ENCODE measurements at regions of chr7 and their contacts with region 1.

Region 1: DNA sequence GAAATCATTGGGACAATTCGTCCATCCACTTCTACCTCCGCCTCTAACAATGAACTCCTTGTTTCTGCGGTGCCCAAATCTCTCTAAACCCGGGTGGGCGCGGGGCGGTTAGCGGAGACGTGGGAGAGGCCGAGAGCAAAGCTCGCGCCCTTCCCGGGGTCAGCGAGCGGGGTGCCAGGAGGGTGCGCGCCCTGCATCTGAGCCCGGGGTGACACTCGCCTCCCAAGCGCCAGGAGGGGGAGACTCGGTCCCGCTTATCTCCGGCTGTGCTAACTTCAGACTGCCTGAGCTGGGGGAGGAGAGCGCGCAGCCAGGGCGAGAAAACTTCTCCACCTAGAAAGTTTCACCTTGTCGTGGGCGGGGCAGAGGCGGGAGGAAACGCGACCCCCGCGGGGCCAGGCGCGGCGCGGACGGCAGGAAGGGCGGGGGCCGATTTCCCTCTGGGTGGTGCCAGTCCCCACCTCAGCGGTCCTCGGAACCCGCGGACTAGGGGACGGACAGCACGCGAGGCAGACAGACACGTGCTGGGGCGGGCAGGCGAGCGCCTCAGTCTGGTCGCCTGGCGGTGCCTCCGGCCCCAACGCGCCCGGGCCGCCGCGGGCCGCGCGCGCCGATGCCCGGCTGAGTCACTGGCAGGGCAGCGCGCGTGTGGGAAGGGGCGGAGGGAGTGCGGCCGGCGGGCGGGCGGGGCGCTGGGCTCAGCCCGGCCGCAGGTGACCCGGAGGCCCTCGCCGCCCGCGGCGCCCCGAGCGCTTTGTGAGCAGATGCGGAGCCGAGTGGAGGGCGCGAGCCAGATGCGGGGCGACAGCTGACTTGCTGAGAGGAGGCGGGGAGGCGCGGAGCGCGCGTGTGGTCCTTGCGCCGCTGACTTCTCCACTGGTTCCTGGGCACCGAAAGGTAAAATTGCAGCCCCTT is at the start of gene MET:
- DNase-seq: peak; percentile 95
- H3K4me3 ChIP-seq: peak within 1 kb of the TSS; percentile 92 to 98 (median 94)
- H3K27ac ChIP-seq: peak within 1 kb of the TSS; percentile 98
- H3K4me1 ChIP-seq: peaks cover 32% of the 10 kb centered on the region
- H3K27me3 ChIP-seq: no peaks in the 10 kb centered on the region
- CTCF ChIP-seq: peak; percentile 32 to 81
- total RNA-seq, gene MET: 112 to 179 TPM

Region 2: DNA sequence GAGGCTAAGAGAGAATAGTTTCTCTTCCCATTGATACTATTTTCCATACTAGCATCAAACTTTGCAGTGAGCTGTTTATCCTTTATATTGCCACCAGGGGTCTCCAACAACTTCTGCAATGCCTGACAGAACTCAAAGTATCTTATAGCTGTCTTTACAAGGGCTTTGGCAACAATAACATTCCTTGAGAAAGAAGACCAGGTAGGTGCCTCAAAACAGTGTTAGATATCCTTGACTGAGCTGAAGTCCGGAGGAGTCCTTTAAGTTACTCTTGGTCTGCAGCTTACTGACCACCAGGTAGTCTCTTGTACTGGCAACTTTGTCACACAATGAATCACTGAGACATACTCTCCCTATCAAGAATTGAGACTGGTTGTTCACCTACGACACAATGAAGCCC is 491.6 kb before region 1 on chr7:
- CTCF ChIA-PET with region 1: no interaction called
- dilution Hi-C with region 1: no loop called
- in situ Hi-C with region 1: no loop called
- intact Hi-C with region 1: loop called (anchors 5 kb)
- DNase-seq: peak; percentile 52
- H3K4me3 ChIP-seq: no peak overlapping the region
- H3K27ac ChIP-seq: no peak overlapping the region
- H3K4me1 ChIP-seq: peaks cover 26% of the 10 kb centered on the region
- H3K27me3 ChIP-seq: no peaks in the 10 kb centered on the region
- CTCF ChIP-seq: peak; percentile 79 to 86

Region 3: DNA sequence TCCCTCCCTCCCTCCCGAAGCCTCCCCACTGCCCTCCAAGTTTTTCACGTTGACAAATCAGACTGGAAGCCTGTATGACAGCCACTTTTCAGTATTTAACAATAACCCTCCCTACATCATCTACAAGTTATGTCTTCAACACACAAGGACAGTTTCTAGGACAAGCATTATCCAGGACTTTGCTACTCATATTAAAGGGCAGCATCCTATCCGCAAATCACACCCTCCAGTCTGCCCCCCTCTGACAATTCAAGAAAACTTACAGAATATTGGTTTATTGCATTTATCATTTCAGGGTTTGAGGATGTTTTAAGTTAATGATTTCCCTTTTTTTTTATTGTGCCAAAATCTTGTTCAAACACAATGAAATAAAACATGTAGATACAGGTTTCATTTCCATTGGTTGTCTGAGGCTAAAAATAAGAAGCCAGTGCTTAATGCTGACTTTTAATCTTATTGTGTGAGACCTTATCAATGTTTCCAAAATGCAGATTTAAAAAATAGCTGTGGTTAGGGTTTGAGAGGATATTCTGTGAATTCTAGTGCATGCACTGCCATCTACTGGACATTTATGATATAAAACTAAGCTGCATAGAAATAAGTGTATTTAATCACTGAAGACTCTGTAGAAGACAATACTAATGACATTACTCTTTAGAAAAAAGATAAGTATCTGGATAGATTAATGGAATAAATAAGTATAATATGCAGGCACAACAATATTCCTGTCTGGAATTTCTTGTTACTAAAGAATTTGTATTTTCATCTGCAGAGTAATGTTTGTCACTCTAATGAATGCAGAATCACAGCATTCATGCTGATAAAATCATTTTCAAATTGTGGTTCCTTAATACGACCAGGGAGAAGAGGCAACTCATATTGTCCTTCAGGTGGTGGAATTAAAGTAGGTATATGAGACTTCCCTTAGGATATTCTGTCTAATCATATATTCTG is 83.0 kb before region 1 on chr7:
- CTCF ChIA-PET with region 1: interaction called, 3 read pairs
- dilution Hi-C with region 1: no loop called
- in situ Hi-C with region 1: loop called in 1 of 2 experiments (anchors 5 kb)
- intact Hi-C with region 1: loop called (anchors 1 kb)
- DNase-seq: peak; percentile 44
- H3K4me3 ChIP-seq: no peak overlapping the region
- H3K27ac ChIP-seq: peak overlapping the region; percentile 32
- H3K4me1 ChIP-seq: peaks cover 16% of the 10 kb centered on the region
- H3K27me3 ChIP-seq: no peaks in the 10 kb centered on the region
- CTCF ChIP-seq: peak; percentile 45 to 57

Region 4: GRCh38 chr7:116653204-116653603 is 18.7 kb before region 1 on chr7:
- CTCF ChIA-PET with region 1: no interaction called
- dilution Hi-C with region 1: no loop called
- in situ Hi-C with region 1: no loop called
- intact Hi-C with region 1: loop called (anchors 1 kb)
- DNase-seq: peak; percentile 93
- H3K4me3 ChIP-seq: peak overlapping the region in 1 of 3 experiments; percentile 17
- H3K27ac ChIP-seq: peak overlapping the region; percentile 99
- H3K4me1 ChIP-seq: peaks cover 31% of the 10 kb centered on the region
- H3K27me3 ChIP-seq: no peaks in the 10 kb centered on the region
- CTCF ChIP-seq: no peak

Region 5: DNA sequence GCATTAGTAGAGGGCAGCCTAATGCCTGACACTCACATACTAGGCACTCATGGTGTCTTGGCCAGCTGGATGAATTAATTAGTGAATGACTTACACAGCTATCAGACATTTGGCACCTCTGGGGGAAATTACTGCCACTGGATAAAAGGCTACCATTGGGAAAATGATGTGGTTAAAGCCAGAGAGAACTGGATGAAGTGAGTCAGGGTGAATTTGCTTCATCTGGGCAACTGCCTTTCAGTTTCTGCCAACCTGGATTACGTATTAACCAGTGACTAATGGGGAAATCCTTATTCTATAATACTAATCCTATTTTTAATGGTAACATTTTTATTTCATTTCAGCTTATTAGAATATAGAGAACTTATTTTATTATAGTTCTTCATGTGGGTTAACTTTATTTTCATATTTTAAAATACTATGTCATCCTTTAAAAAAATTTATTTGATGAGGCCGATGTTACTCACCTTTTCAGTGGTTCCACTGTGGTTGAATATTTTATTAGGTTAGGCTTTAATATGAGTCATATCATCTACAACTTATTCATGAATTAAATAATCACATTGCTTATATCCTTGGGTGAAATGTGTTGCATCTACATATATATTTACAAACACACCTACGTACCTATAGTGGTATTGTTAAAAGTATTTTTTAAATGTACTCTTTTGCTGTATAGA is 104.8 kb after region 1 on chr7:
- CTCF ChIA-PET with region 1: no interaction called
- dilution Hi-C with region 1: no loop called
- in situ Hi-C with region 1: no loop called
- intact Hi-C with region 1: loop called (anchors 2 kb)
- DNase-seq: peak; percentile 96
- H3K4me3 ChIP-seq: no peak overlapping the region
- H3K27ac ChIP-seq: peak overlapping the region; percentile 92
- H3K4me1 ChIP-seq: peaks cover 65% of the 10 kb centered on the region
- H3K27me3 ChIP-seq: no peaks in the 10 kb centered on the region
- CTCF ChIP-seq: no peak

Region 6: DNA sequence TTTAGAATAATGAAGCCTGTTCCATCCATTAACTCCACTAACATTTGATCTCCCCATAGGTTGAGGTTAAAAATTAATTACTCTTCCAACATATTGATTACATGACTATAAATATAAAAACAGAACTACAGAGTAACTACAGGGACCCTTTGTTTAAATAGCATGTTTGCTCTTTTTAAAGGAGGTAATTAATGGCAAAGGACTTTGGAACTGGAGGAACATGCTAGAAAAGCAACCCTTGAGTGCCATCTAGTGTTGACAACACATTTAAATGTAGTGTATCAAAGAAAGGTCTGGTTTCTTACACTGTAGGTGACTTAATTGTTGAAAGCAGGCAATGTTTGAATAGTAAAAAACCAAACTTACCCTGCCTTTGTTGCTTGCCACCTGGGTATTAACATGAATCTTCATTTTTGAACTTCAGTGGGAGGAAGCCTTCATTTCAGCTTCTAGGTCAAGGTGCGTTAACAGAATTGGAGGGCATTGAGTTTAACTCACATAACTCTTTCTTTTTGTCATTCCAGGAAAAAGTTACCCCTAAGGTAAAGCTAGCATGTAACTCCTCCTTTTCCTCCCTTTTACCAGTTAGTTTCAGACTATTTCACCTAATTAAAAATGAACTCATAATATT is 137.8 kb after region 1 on chr7:
- CTCF ChIA-PET with region 1: no interaction called
- dilution Hi-C with region 1: no loop called
- in situ Hi-C with region 1: loop called in 1 of 2 experiments (anchors 10 kb)
- intact Hi-C with region 1: loop called (anchors 1 kb)
- DNase-seq: peak; percentile 56
- H3K4me3 ChIP-seq: no peak overlapping the region
- H3K27ac ChIP-seq: no peak overlapping the region
- H3K4me1 ChIP-seq: peaks cover 3% of the 10 kb centered on the region
- H3K27me3 ChIP-seq: no peaks in the 10 kb centered on the region
- CTCF ChIP-seq: peak; percentile 45 to 65

Region 7: GRCh38 chr7:116834815-116835533 is 163.0 kb after region 1 on chr7:
- CTCF ChIA-PET with region 1: no interaction called
- dilution Hi-C with region 1: no loop called
- in situ Hi-C with region 1: no loop called
- intact Hi-C with region 1: no loop called
- DNase-seq: peak; percentile 87
- H3K4me3 ChIP-seq: no peak overlapping the region
- H3K27ac ChIP-seq: no peak overlapping the region
- H3K4me1 ChIP-seq: peaks cover 12% of the 10 kb centered on the region
- H3K27me3 ChIP-seq: no peaks in the 10 kb centered on the region
- CTCF ChIP-seq: no peak

Region 8: DNA sequence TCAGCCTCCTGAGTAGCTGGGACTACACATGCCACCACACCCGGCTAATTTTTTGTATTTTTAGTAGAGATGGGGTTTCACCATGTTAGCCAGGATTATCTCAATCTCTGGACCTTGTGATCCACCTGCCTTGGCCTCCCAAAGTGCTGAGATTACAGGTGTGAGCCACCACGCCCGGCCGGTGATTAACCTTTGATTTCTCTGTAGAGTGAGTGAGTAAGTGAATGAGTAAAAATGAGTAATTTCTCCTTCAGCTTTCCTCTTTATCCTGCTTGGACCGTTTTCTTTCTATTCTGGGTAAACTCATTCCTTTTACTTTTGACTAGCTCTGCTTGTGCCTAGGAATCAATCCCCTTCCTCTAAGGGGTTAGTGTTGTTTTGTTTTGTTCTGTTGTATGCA is 318.1 kb after region 1 on chr7:
- CTCF ChIA-PET with region 1: interaction called, 11 read pairs
- dilution Hi-C with region 1: no loop called
- in situ Hi-C with region 1: no loop called
- intact Hi-C with region 1: no loop called
- DNase-seq: peak; percentile 58
- H3K4me3 ChIP-seq: no peak overlapping the region
- H3K27ac ChIP-seq: no peak overlapping the region
- H3K4me1 ChIP-seq: peaks cover 9% of the 10 kb centered on the region
- H3K27me3 ChIP-seq: no peaks in the 10 kb centered on the region
- CTCF ChIP-seq: no peak